Prostate gland (tissue), 2 donors: ENCODE measurements at regions of chrX and their contacts with region 1.

Region 1: DNA sequence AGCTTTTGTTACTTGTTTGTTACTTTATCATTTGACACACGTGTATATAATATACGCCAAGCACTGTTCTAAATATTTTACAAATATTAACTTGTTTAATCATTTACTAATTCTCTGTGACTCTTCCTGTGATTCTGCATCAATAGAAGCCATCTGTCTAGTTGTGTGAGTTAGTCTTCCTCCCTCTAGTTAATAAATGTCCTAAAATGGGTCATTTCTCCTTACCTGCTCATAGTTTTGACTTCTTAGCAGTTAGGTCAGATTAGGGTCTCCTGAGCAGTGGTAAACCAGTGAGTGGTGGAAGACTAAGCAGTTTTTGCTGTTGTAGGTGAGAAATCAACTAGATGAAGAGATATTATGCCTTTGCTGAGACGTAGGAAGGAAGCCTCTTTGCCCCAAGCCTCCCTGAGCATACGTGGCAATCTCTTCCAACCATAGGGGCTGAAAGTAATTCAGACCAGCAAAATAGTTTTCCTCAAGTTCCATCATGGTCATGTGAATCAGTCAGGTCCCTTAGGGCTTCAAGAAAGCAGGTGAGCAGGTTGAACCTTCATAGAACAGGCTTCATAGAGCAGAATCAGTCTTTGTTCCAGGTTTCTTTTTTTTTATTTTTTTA is 38.7 kb upstream of the THOC2 start:
- DNase-seq: no peak
- H3K4me3 ChIP-seq: no peak overlapping the region
- H3K27ac ChIP-seq: no peak overlapping the region
- H3K4me1 ChIP-seq: no peaks in the 10 kb centered on the region
- H3K27me3 ChIP-seq: no peaks in the 10 kb centered on the region
- CTCF ChIP-seq: no peak
- POLR2A ChIP-seq: no peak

Region 2: DNA sequence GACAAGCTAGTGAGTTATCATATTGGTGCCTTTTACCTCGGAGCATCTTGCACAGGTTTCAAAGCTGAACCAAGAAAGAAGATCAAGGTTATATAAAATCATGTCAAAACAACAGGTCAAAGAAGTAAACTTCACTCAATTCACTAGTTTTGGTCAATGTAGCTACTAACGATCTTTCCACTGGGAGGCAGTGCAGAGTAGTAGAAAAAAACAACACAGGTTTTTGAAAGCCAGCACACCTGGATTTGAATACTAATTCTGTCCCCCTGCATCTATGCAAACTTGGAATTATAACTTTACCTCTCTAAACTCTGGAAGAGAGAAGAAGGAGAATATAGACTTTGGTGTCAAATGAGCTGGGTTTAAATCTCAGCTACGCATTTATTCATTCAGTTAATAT is 321.3 kb before region 1 on chrX:
- intact Hi-C with region 1: loop called (anchors 10 kb)
- DNase-seq: no peak
- H3K4me3 ChIP-seq: no peak overlapping the region
- H3K27ac ChIP-seq: no peak overlapping the region
- H3K4me1 ChIP-seq: no peaks in the 10 kb centered on the region
- H3K27me3 ChIP-seq: no peaks in the 10 kb centered on the region
- CTCF ChIP-seq: peak in 1 of 4 experiments; percentile 15
- POLR2A ChIP-seq: no peak

Region 3: DNA sequence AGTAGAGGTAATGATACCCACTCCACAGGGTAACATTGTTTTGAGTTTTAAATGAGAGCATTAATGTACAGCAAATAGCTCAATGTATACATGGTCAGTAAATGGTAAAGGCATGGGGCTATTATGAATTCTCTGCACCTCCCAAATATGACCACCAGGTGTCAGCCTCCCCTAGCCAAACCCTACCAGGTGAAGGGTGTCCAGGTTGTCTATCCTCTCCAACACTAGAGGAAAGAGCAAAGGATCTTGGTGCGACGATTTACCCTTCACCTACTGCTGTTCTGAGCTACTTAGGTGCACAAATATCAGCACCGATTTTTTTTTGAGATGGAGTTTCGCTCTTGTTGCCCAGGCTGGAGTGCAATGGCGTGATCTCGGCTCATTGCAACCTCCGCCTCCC is 61.8 kb after region 1 on chrX:
- intact Hi-C with region 1: no loop called
- DNase-seq: peak; percentile 45
- H3K4me3 ChIP-seq: no peak overlapping the region
- H3K27ac ChIP-seq: no peak overlapping the region
- H3K4me1 ChIP-seq: no peaks in the 10 kb centered on the region
- H3K27me3 ChIP-seq: no peaks in the 10 kb centered on the region
- CTCF ChIP-seq: peak in 3 of 4 experiments; percentile 59 to 71 (median 69)
- POLR2A ChIP-seq: no peak